Gastrocnemius medialis (tissue), 4 donors: ENCODE measurements at regions of chr4 and their contacts with region 1.

Region 1: DNA sequence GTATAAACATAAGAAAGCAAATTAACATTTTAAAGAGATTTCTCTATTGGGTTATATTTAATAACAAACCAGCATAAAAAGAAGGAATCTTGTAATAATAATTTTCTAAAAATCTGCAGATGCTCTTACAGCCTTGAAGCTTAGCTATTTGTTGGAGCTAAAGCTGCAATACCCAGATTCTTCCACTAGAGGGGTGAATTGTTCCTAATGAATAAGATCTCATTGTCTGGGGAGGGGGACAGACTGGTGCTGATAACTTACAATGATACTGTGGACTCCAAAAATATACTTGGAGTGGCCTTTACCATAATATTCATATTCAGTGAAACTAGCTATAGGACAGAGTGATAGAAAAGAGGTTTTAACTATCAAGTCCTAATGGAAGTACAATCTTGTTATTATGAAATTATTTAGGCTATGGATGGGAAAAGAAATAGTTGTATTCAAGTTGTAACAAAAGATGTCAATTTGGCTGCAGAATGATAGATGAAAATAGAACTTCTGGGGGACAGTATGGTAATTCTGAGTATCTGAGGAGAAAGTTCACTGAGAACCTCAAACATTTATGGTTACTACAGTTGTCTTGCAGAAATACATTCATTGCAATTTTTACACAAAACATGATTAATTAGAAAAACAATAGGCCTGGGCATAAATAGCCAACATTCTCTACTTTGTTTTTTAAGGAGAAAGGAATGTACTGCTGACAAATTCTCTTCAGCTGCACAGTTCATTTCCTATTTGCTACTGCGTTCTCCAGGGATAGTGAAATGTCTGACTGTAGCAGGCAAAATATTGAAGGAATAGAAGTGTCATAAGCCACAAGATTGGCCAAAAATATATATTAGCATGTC is 443.3 kb downstream of the GBA3 start:
- DNase-seq: no peak
- ATAC-seq: no peak
- H3K4me3 ChIP-seq: no peak overlapping the region
- H3K27ac ChIP-seq: no peak overlapping the region
- H3K4me1 ChIP-seq: no peaks in the 10 kb centered on the region
- H3K27me3 ChIP-seq: no peaks in the 10 kb centered on the region
- CTCF ChIP-seq: peak; percentile 44 to 76 (median 50)
- POLR2A ChIP-seq: no peak

Region 2: DNA sequence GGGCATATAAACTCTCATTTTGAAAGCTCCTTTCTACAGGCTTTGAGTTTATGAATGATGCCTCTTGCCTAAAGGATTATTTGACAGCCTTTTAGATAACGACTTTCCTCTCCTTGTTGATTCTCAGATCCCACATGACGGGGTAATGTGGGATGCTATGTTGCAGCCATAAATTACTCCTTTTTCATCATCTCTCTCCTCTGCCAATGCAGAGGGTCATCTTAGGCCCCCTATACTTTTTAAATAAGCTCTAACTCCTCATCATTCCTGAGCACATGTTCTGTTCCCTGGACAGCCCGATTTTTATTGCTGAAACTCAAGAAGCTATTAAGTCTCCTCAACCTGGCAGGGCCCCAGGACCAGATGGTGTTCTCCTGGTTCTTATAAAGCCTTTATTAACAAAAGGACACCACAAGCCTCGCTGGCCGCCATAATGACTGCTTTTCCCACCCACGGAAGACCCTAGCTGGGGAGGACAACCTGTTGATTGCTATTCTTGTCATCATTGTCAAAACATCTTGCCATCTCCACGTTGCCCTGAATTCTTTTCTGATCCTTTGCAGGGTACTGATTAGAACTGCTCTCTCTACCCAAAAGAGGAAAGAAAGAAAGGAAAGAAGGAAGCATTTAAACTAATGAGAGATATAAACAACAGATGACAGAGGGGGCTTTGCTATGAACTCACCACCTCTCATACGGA is 1297.6 kb after region 1 on chr4:
- in situ Hi-C with region 1: loop called in 1 of 4 experiments (anchors 25 kb)
- intact Hi-C with region 1: no loop called
- DNase-seq: peak; percentile 22 to 29
- ATAC-seq: peak; percentile 60 to 74
- H3K4me3 ChIP-seq: peak overlapping the region; percentile 15 to 36 (median 25)
- H3K27ac ChIP-seq: peak overlapping the region; percentile 55 to 77 (median 60)
- H3K4me1 ChIP-seq: peaks cover 4 to 8% of the 10 kb centered on the region in 2 donors
- H3K27me3 ChIP-seq: no peaks in the 10 kb centered on the region
- CTCF ChIP-seq: no peak
- POLR2A ChIP-seq: no peak